Cardiac septum (tissue), 1 donor: ENCODE measurements at regions of chr12 and their contacts with region 1.

Region 1: DNA sequence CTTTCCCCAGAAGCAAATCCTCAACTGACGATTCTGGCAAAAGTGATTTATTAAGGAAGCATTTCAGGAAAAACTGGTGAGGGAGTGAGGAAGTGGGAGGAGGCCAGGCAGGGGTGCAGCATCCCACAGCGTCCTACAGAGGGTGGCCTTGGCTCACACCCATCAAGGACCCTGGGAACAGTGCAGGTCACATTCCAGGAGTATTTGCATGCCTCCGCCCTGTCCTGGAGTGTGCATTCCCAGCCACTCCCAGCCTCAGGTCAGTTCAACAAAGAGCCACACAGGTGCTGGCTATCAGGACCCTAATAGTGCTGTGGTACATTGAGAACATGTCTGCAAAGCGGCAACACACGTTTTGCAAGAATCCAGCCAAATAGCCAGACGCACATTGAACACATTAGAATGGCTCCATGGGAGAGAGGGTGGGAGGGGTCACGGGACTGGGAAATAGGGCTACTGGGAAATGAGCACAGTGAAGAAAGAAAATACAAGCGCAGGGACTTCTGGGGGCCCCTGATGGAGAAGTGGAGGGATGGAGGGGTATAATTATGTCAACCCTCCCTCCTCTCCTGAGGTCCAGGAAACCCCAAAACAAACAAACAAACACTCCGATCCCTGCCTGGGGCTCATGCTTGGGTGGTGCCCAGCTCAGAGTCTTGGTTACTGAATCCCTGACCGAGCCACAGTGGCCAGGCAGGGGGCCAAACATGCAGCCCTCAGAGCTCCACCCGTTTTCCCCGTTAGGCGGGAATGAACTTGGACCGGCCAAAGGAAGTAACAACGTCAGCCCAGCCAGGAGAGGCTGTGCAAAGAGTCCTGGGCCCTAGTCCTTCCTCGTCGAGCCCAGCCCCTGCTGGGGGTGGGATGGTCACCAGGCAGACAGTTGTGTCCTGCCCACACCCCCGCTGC is 36.5 kb downstream of the CMKLR1 start:
- DNase-seq: peak; percentile 90

Region 2: DNA sequence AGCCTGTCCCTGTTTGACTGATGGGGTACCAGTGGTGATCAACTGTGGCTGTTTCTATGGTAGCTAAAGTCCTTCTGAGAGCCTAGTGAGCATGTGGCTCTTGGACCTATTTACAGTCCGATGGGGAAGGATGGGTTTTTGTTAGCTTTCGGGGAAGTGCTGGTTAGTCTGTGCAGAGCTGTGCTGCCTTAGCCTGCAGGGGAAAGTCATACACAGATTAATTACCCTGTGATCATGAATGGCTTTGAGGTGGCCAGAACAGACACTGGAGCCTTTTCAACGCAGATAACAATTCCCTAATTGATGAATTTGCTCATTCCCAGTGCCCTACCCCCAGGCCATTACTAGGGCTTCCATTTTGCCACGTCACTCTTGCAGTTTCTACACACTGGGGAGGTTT is 73.9 kb before region 1 on chr12:
- intact Hi-C with region 1: no loop called
- DNase-seq: no peak

Region 3: DNA sequence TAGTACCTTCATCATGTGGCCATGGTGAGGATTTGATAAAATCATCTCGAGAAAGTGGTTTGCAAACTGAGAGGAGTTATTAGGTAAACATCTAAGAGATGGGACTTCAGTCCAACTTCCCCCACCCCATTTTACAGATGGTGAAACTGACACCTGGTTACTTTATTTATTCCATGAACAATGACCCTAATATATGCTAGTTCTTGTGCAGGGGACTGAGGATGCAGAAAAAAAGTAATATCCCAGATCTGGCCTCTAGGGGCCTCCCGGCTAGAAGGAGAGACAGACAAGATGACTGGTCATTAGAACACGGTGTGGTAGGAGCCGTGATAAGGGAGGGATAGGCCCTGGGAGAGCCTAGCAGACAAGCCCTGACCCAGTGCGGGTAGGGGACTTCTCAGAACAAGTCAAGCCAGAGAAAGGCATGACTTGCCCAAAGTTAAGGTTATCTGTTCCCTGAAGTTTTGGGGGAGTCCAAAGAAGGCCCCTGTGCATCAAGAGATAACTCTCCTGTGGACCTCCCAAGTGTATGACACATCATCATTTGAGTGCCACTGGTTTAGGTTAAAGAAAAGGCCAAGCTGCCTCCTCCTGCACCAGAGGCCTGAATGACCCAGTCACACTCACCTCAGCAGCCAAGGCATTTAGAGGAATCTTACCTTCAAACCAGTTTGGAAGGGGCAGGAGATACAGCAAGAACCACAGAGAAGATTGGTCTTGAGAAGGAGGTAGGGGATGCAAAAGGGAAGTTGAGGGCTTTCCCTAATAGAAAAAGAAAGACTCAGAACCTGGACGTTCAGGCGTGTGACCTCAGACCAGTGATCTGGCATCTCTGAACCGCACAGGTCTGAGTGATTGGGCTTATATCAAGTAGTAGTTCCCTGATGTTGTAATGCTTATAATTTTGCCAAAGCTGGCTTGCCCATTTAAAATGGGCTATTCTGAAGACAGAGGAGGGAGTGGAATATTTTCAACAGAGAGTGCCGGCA is 34.9 kb after region 1 on chr12:
- intact Hi-C with region 1: loop called (anchors 5 kb)
- DNase-seq: no peak

Region 4: DNA sequence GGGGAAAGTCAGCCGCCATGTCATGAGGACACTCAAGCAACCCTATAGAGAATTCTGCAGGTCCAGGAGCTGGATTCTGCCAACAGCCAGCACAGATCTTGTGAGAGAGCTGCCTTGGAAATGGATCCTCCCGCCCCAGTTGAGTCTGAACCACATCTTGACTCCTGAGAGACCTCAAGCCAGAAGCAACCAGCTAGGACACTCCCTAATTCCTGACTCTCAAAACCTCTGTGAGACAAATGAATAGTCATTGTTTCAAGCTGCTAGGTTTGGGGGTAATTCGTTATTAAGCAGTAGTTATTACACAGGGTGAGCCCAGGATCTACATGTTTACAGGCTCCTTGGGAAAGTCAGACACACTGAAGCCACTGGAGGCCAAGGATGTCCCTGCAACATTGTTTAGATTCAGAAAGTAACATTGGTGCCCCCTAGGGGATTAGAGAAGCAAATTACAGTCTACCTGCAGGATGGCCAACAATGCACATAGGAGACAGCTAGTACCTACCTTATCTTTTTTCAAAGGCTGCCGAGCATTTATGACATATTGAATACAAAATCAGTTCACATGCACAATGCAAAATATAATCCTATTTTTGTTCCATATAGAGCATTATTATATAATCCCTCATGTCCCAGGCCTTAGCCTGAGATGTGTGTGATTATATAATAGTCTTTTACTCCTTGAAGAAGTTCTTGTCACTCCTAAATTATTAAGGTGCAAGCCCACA is 154.5 kb after region 1 on chr12:
- intact Hi-C with region 1: no loop called
- DNase-seq: no peak